Panc1 (cell line): ENCODE measurements at regions of chr18 and their contacts with region 1.

Region 1: GRCh38 chr18:74353169-74353775 is 37.6 kb downstream of the C18orf63 start:
- DNase-seq: peak; percentile 59
- ATAC-seq: peak; percentile 95
- H3K4me3 ChIP-seq: no peak overlapping the region
- H3K27ac ChIP-seq: no peak overlapping the region
- H3K4me1 ChIP-seq: no peaks in the 10 kb centered on the region
- H3K27me3 ChIP-seq: peaks cover 23% of the 10 kb centered on the region
- CTCF ChIP-seq: peak; percentile 91

Region 2: DNA sequence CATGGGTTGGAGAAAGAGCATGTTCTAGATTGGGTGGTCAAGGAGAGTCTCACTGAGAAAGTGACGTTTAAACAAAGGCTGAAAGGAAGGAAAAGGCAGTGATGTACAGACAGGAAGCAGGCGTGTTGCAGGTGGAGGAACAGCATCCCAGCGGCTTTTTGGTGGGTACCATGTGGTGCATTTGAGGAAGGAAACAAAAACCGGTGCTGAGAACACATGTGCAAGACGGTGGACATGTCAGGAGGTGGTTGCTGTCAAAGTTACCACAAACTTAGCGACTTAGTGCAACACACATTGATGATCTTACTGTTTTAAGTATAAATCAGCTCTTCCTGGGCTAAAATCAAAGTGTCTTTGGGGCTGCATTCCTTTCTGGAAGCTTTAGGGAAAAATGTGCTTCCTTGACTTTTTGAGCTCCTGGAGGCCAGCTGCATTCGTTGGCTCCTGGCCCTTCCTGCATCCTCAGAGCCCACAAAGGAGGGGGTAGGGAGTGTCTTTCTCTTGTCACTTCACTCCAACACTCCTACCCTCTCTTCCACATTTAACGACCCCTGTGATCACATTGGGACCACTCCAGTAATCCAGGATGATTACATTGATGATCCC is 586.3 kb before region 1 on chr18:
- CTCF ChIA-PET with region 1: no interaction called
- POLR2A ChIA-PET with region 1: no interaction called
- in situ Hi-C with region 1: no loop called
- intact Hi-C with region 1: no loop called
- DNase-seq: no peak
- ATAC-seq: no peak
- H3K4me3 ChIP-seq: no peak overlapping the region
- H3K27ac ChIP-seq: no peak overlapping the region
- H3K4me1 ChIP-seq: no peaks in the 10 kb centered on the region
- H3K27me3 ChIP-seq: no peaks in the 10 kb centered on the region
- CTCF ChIP-seq: no peak

Region 3: GRCh38 chr18:74551936-74552555 is 198.8 kb after region 1 on chr18:
- CTCF ChIA-PET with region 1: interaction called, 23 read pairs
- POLR2A ChIA-PET with region 1: no interaction called
- in situ Hi-C with region 1: no loop called
- intact Hi-C with region 1: loop called (anchors 2 kb)
- DNase-seq: peak; percentile 80
- ATAC-seq: peak; percentile 100
- H3K4me3 ChIP-seq: no peak overlapping the region
- H3K27ac ChIP-seq: no peak overlapping the region
- H3K4me1 ChIP-seq: no peaks in the 10 kb centered on the region
- H3K27me3 ChIP-seq: 0 out of 2 replicates have a peak, but pooled peaks cover 4% of the 10 kb centered on the region
- CTCF ChIP-seq: no peak